ENCODE measurements at regions of chr11 and their contacts with region 1.

Region 1: GRCh38 chr11:107655607-107656006 is 56.2 kb downstream of the SLN start:
- DNase-seq: no peak
- H3K4me3 ChIP-seq: no peak overlapping the region
- CTCF ChIP-seq: no peak
- POLR2A ChIP-seq: no peak

Region 2: DNA sequence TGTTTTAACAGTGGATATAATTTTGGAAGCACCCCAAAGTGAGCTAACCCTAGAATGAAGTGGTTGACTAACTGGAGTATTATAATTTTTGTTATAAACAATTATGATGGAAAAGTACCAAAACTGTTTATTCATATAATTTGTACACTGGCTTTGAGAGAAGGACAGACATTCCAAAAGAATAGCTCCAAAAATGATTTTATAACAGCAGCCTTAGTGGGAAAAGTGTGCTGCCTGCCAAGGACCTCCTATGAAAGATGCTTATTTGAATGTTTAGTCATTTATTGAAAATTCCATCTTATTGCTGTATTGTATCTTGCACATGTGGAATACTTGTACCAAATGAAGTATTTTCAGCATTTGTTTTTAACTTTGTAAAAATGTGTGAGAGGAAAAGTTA is 807.1 kb before region 1 on chr11:
- intact Hi-C with region 1: loop called (anchors 5 kb)
- DNase-seq: no peak
- H3K4me3 ChIP-seq: no peak overlapping the region
- CTCF ChIP-seq: no peak
- POLR2A ChIP-seq: no peak

Region 3: DNA sequence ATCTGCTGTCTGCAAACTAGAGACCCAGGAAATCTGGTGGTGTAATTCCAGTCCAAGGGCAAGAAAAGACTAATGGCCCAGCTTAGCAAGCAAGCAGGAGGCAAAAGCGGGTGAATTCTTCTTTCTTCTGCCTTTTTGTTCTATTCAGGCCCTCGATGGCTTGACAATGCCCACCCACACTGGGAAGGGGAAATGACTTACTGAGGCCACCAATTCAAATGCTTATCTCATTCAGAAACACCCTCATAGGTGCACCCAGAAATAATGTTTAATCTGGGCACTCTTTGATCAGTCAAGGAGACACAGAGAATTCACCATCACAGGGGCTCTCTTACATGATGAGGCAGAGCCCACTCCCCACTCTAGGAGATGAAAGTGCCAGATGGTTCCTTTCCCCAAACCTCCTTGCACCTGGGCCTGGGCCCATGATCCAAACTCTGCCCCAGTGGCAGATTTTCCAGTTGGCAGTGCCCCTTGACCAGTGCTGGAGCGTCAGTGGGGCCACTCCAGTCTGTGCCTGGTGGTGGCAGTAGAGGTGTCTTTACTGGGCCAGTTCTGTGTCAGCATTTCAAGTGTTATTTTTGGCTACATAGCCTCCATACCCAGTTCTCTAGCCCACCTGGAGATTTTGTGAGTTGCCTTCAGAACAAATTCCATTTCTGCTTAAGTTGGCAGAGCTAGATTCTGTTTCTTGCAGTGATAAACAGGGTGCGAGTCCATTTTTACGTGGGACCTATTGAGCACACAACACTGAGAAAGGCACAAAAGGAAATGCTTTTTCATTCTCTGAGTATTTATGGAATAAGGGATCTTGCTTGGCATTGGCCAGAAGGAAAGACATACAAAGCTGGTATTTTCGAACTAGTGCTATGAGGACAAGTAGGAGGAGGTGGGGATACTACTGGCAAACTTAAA is 57.1 kb before region 1 on chr11:
- intact Hi-C with region 1: no loop called
- DNase-seq: no peak
- H3K4me3 ChIP-seq: no peak overlapping the region
- CTCF ChIP-seq: no peak
- POLR2A ChIP-seq: no peak

Region 4: GRCh38 chr11:107770551-107770951 is 114.9 kb after region 1 on chr11:
- intact Hi-C with region 1: no loop called
- DNase-seq: no peak
- H3K4me3 ChIP-seq: no peak overlapping the region
- CTCF ChIP-seq: no peak
- POLR2A ChIP-seq: no peak

Measured in lower leg skin (tissue), 4 donors.